Ovary (tissue), 10 donors: ENCODE measurements at regions of chr7 and their contacts with region 1.

Region 1: GRCh38 chr7:151782598-151783448 is 94.1 kb downstream of the PRKAG2 start:
- DNase-seq: peak; percentile 63 to 82 (median 76)
- H3K4me3 ChIP-seq: peak overlapping the region; percentile 13
- H3K27ac ChIP-seq: no peak overlapping the region
- H3K4me1 ChIP-seq: no peaks in the 10 kb centered on the region
- H3K27me3 ChIP-seq: no peaks in the 10 kb centered on the region
- CTCF ChIP-seq: peak; percentile 70 to 88 (median 73)
- EP300 ChIP-seq: no peak
- POLR2A ChIP-seq: no peak

Region 2: DNA sequence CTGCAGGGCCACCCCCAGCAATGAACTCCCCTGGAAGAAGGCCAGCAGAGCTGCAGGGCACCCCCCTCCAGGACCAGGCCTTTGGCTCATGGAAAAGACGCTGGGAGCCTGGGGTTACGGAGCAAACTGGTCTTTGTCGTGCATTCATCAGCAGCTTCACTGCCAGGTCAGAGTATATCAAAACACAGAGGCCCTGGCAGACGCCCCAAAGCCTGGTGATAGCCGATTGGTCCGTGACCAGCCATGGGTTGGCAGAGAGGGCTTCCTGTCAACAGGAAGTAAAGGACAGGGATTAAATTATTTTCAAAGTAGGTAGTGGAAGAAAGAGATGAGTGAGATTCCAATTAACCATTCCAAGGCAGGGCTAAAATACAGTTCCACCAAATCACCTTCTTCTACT is 85.1 kb after region 1 on chr7:
- intact Hi-C with region 1: loop called in 2 of 4 experiments (anchors 5 to 10 kb)
- DNase-seq: peak; percentile 60 to 81 (median 65)
- H3K4me3 ChIP-seq: no peak overlapping the region
- H3K27ac ChIP-seq: peak overlapping the region; percentile 58 to 76
- H3K4me1 ChIP-seq: peaks cover 27% of the 10 kb centered on the region
- H3K27me3 ChIP-seq: no peaks in the 10 kb centered on the region
- CTCF ChIP-seq: no peak
- EP300 ChIP-seq: no peak
- POLR2A ChIP-seq: no peak

Region 3: DNA sequence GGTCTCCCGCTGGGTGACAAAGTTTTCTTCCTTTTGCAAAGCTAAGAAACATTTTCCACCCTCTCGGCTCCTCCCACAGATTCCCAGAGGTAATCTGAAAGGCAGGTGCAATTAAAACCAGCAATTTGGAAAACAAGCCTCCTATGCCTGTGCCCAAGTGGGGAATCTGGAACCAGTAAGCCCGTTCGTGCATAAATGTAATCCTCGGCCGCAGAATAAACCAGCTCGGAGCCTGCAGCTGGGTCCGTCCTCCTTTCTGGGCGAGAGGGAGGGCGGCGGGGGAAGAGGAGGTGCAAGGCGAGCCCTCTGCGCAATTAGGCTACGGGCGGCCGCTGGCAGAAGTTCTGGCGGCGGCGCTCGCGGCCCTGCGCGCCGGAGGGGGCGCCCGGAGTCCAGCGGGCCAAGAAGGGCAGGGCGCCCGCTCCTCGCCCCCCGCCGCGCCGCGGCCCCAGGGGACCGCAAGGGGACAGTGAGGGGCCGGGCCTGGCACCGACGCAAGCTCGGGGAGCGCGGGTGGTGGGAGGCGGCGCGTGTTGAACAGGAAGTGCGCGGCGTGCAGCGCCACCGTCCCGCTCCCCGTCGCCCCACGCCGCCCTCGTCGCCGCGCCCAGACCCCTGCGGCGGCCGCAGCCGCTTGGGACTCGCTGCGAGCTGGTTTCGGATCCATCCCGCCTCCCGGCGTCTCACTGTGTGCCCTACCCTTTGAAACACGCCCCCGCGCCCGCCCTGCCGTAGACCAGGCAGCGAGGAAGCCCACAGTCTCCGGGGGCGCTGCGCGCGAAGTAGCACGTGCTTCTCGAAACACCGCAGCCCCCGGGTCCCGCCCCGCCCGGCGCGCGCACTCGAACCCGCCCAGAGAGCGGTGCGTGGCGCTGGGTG is 94.3 kb after region 1 on chr7 and contains the start of gene PRKAG2:
- intact Hi-C with region 1: loop called in 1 of 4 experiments (anchors 10 kb)
- DNase-seq: peak; percentile 67 to 84 (median 77)
- H3K4me3 ChIP-seq: peak within 1 kb of the TSS; percentile 84
- H3K27ac ChIP-seq: peak within 1 kb of the TSS; percentile 97 to 99
- H3K4me1 ChIP-seq: peaks cover 5% of the 10 kb centered on the region
- H3K27me3 ChIP-seq: no peaks in the 10 kb centered on the region
- CTCF ChIP-seq: peak in 2 of 3 donors; percentile 8 to 17
- EP300 ChIP-seq: no peak
- POLR2A ChIP-seq: peak; percentile 26
- total RNA-seq, gene PRKAG2: 9.3 to 37.7 (median 22.6) TPM

Region 4: GRCh38 chr7:151936207-151936606 is 153.4 kb after region 1 on chr7:
- intact Hi-C with region 1: loop called in 2 of 4 experiments (anchors 5 to 10 kb)
- DNase-seq: no peak
- H3K4me3 ChIP-seq: no peak overlapping the region
- H3K27ac ChIP-seq: no peak overlapping the region
- H3K4me1 ChIP-seq: no peaks in the 10 kb centered on the region
- H3K27me3 ChIP-seq: no peaks in the 10 kb centered on the region
- CTCF ChIP-seq: no peak
- EP300 ChIP-seq: no peak
- POLR2A ChIP-seq: no peak

Region 5: GRCh38 chr7:153590139-153590538 is 1807.3 kb after region 1 on chr7:
- intact Hi-C with region 1: loop called in 1 of 4 experiments (anchors 10 kb)
- DNase-seq: no peak
- H3K4me3 ChIP-seq: no peak overlapping the region
- H3K27ac ChIP-seq: no peak overlapping the region
- H3K4me1 ChIP-seq: no peaks in the 10 kb centered on the region
- H3K27me3 ChIP-seq: no peaks in the 10 kb centered on the region
- CTCF ChIP-seq: no peak
- EP300 ChIP-seq: no peak
- POLR2A ChIP-seq: no peak